ENCODE measurements at regions of chr10 and their contacts with region 1.

Region 1: GRCh38 chr10:504121-504611 is 185.3 kb downstream of the DIP2C start:
- DNase-seq: no peak
- H3K4me3 ChIP-seq: no peak overlapping the region
- H3K27ac ChIP-seq: no peak overlapping the region
- H3K4me1 ChIP-seq: peaks cover 34% of the 10 kb centered on the region
- CTCF ChIP-seq: no peak

Region 2: DNA sequence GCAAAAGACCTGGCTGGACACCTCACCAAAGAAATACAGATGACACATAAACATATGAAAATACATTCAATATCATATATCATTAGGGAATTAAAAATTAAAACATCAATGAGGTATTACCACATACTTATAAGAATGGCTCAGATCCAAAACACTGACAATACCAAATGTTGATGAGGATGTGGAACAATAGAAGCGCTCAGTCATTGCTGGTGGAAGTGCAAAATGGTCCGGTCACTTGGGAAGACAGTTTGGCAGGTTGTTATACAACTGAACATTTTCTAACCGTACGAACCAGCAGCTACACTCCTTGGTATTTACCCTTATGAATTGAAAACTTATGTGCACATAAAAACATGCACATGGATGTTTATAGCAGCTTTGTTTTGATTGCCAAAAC is 330.4 kb before region 1 on chr10:
- CTCF ChIA-PET with region 1: no interaction called
- POLR2A ChIA-PET with region 1: no interaction called
- intact Hi-C with region 1: no loop called
- DNase-seq: no peak
- H3K4me3 ChIP-seq: no peak overlapping the region
- H3K27ac ChIP-seq: no peak overlapping the region
- H3K4me1 ChIP-seq: no peaks in the 10 kb centered on the region
- CTCF ChIP-seq: no peak

Region 3: GRCh38 chr10:287814-288213 is 216.4 kb before region 1 on chr10:
- CTCF ChIA-PET with region 1: no interaction called
- POLR2A ChIA-PET with region 1: no interaction called
- intact Hi-C with region 1: loop called (anchors 2 kb)
- DNase-seq: no peak
- H3K4me3 ChIP-seq: peak overlapping the region; percentile 36
- H3K27ac ChIP-seq: peak overlapping the region; percentile 94
- H3K4me1 ChIP-seq: peaks cover 73% of the 10 kb centered on the region
- CTCF ChIP-seq: peak; percentile 26; the same call in 1 of the 2 replicates

Region 4: DNA sequence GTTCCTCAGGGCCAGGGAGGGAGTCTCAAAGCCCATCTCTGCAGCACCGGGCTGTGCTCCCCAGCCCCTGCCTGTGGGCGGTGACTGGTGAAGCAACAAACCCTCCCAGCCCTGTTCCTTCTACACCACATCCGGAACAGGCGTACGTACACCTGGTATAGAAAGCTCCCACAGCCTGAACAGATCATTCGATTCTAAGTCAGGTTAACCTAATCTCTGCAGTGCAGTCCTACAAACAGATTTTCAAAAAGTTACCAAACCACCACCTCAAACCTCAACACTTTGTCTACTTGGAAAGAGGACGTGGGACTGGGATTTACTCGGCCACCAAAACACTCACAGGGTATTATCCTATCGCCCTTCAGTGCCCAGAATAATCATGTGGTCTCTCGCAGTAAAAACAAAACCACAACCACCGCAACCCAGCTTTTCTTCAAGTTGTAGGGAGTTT is 53.1 kb before region 1 on chr10:
- CTCF ChIA-PET with region 1: no interaction called
- POLR2A ChIA-PET with region 1: no interaction called
- intact Hi-C with region 1: loop called (anchors 1 kb)
- DNase-seq: peak; percentile 93
- H3K4me3 ChIP-seq: peak overlapping the region; percentile 55
- H3K27ac ChIP-seq: peak overlapping the region; percentile 85
- H3K4me1 ChIP-seq: peaks cover 41% of the 10 kb centered on the region
- CTCF ChIP-seq: no peak

Region 5: GRCh38 chr10:613271-614138 is 109.3 kb after region 1 on chr10:
- CTCF ChIA-PET with region 1: no interaction called
- POLR2A ChIA-PET with region 1: no interaction called
- intact Hi-C with region 1: no loop called
- DNase-seq: no peak
- H3K4me3 ChIP-seq: no peak overlapping the region
- H3K27ac ChIP-seq: no peak overlapping the region
- H3K4me1 ChIP-seq: no peaks in the 10 kb centered on the region
- CTCF ChIP-seq: no peak

Region 6: GRCh38 chr10:1059891-1060292 is 555.7 kb after region 1 on chr10:
- CTCF ChIA-PET with region 1: no interaction called
- POLR2A ChIA-PET with region 1: no interaction called
- intact Hi-C with region 1: no loop called
- DNase-seq: no peak
- H3K4me3 ChIP-seq: no peak overlapping the region
- H3K27ac ChIP-seq: no peak overlapping the region
- H3K4me1 ChIP-seq: peaks cover 35% of the 10 kb centered on the region
- CTCF ChIP-seq: no peak